ENCODE measurements at regions of chr20 and their contacts with region 1.

Region 1: GRCh38 chr20:45373353-45374100 is 4.6 kb downstream of the TP53TG5 start:
- DNase-seq: peak; percentile 67
- H3K4me3 ChIP-seq: peak overlapping the region in 2 of 3 experiments; percentile 28 to 49
- H3K27ac ChIP-seq: no peak overlapping the region
- H3K4me1 ChIP-seq: peaks cover 3% of the 10 kb centered on the region
- H3K27me3 ChIP-seq: no peaks in the 10 kb centered on the region
- CTCF ChIP-seq: peak; percentile 95 to 96

Region 2: GRCh38 chr20:45311589-45312211 is 61.8 kb before region 1 on chr20:
- CTCF ChIA-PET with region 1: no interaction called
- dilution Hi-C with region 1: loop called (anchors 5 kb)
- in situ Hi-C with region 1: no loop called
- intact Hi-C with region 1: no loop called
- DNase-seq: no peak
- H3K4me3 ChIP-seq: no peak overlapping the region
- H3K27ac ChIP-seq: no peak overlapping the region
- H3K4me1 ChIP-seq: no peaks in the 10 kb centered on the region
- H3K27me3 ChIP-seq: peaks cover 4% of the 10 kb centered on the region
- CTCF ChIP-seq: peak; percentile 72 to 87